GM12878 (cell line): ENCODE measurements at regions of chr15 and their contacts with region 1.

Region 1: GRCh38 chr15:32743411-32744140 is 25.8 kb downstream of the GREM1 start:
- DNase-seq: no peak
- ATAC-seq: no peak
- H3K4me3 ChIP-seq: no peak overlapping the region
- H3K27ac ChIP-seq: no peak overlapping the region
- H3K4me1 ChIP-seq: no peaks in the 10 kb centered on the region
- H3K27me3 ChIP-seq: no peaks in the 10 kb centered on the region; a peak in 1 of 4 replicates
- CTCF ChIP-seq: no peak
- EP300 ChIP-seq: no peak
- POLR2A ChIP-seq: no peak
- RAD21 ChIP-seq: no peak

Region 2: GRCh38 chr15:32683906-32684584 is 59.5 kb before region 1 on chr15:
- CTCF ChIA-PET with region 1: no interaction called
- POLR2A ChIA-PET with region 1: no interaction called
- RAD21 ChIA-PET with region 1: no interaction called
- SMC1A ChIA-PET with region 1: interaction called, 5 read pairs
- in situ Hi-C with region 1: no loop called
- intact Hi-C with region 1: loop called (anchors 10 kb)
- DNase-seq: no peak
- ATAC-seq: no peak
- H3K4me3 ChIP-seq: no peak overlapping the region
- H3K27ac ChIP-seq: no peak overlapping the region
- H3K4me1 ChIP-seq: peaks cover 3% of the 10 kb centered on the region; the same call in 1 of the 2 replicates
- H3K27me3 ChIP-seq: no peaks in the 10 kb centered on the region
- CTCF ChIP-seq: no peak
- EP300 ChIP-seq: no peak
- POLR2A ChIP-seq: no peak
- RAD21 ChIP-seq: no peak

Region 3: DNA sequence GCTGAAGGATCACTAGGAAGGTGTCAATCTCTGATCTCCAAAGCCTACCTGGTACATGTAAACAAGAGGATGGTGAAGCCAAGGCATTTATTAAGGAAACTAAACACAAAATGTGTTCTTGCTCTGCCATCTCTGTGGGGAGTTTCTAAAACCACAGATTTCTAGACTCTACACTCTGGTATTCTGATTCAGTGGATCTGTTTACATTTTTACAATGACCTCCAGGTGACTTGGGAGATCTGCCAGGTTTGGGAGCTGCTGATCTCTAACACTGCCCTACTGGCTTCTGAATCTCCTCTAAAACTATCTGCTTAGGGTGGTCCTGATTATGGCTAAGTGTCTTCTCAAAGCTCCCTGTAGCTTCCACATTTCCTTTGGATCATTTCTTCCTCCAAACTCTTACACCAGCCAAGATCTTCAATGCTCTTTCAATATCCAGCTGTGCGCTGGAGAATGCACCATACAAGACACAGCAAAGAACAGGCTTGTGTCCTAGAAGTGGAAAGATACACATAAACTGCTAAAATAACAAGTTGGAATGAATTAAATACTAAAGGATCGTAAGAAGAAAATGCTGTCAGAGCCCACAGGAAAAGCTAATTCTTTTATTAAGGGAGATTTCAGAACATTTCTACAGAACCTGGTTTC is 46.9 kb after region 1 on chr15:
- CTCF ChIA-PET with region 1: no interaction called
- POLR2A ChIA-PET with region 1: no interaction called
- RAD21 ChIA-PET with region 1: no interaction called
- SMC1A ChIA-PET with region 1: no interaction called
- in situ Hi-C with region 1: no loop called
- intact Hi-C with region 1: loop called (anchors 10 kb)
- DNase-seq: no peak
- ATAC-seq: no peak
- H3K4me3 ChIP-seq: no peak overlapping the region
- H3K27ac ChIP-seq: no peak overlapping the region
- H3K4me1 ChIP-seq: no peaks in the 10 kb centered on the region
- H3K27me3 ChIP-seq: peaks cover 0 to 2% of the 10 kb centered on the region in 2 experiments; a peak in 2 of 4 replicates
- CTCF ChIP-seq: no peak
- EP300 ChIP-seq: no peak
- POLR2A ChIP-seq: no peak
- RAD21 ChIP-seq: no peak